ENCODE measurements at regions of chr10 and their contacts with region 1.

Region 1: DNA sequence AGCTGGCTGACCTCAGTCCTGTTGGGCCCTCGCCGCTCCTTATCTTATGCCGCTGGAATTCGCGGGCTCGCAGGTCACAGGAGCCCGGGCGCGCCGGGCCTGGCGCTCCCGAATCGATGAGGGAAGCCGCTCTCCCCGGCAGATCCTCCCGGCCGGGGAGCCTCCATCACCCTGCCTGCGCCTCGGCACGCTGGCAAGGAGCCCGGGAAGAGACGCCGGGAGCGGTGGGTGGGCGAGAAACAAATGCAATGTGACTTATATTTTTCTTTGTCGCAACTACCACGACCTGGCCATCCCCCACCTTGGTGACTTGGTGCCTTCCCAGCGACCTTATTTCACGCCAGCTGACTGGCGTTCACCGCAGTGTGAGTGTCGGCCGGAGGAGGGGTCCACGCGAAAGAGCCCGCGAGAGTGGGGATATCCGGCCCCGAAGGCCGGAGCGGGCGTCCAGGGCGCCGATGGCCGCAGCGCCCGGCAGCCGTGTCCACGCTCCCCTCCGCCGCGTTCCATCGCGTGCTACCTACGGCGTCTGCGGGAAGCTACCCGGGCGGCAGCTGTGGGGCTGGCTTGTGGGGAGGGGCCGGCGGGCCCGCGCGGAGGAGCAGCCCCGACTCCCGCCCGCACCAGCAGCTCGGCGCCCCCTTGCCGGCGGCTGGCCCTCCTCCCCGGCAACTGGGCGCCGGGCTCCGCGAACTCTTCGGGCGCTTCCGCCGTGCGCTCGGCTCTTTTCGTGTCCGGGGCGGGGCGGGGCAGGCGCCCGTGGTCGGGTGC is 494 bp upstream of the BMPR1A start:
- DNase-seq: peak; percentile 89
- H3K4me3 Mint-ChIP-seq: peak overlapping the region; percentile 79
- H3K27ac Mint-ChIP-seq: peak overlapping the region; percentile 59
- H3K4me1 Mint-ChIP-seq: peaks cover 53% of the 10 kb centered on the region
- H3K27me3 Mint-ChIP-seq: peaks cover 13% of the 10 kb centered on the region

Region 2: DNA sequence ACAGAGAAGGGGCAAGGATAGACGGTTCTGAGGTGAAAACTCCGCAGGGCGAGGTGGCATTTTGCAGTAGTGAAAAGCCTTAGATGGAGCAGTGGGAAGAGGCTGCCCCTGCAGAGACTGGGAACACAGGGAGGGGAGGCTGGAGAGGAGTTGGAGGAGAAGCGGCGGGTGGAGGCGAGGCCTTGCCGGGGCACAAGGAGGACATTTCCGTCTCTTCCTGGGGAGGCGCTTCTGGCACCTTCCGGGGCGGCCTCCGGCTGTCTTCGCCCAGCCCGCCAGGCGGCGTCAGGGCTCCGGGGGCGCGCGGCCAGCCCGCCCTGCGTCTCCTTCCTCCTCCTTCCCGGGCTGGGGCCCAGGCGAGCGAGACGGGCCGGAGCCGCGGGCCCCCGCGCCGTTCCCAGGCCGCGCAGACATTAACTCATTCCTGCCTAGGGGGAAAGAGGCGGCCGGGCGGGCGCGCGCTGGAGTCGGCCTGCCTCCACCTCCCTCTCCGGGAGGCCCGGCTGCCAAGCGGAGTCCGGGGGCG is 44.9 kb before region 1 on chr10:
- CTCF ChIA-PET with region 1: interaction called, 3 read pairs
- POLR2A ChIA-PET with region 1: interaction called, 31 read pairs
- DNase-seq: peak; percentile 88
- H3K4me3 Mint-ChIP-seq: peak overlapping the region; percentile 84
- H3K27ac Mint-ChIP-seq: peak overlapping the region; percentile 92
- H3K4me1 Mint-ChIP-seq: peaks cover 15% of the 10 kb centered on the region
- H3K27me3 Mint-ChIP-seq: no peaks in the 10 kb centered on the region

Region 3: DNA sequence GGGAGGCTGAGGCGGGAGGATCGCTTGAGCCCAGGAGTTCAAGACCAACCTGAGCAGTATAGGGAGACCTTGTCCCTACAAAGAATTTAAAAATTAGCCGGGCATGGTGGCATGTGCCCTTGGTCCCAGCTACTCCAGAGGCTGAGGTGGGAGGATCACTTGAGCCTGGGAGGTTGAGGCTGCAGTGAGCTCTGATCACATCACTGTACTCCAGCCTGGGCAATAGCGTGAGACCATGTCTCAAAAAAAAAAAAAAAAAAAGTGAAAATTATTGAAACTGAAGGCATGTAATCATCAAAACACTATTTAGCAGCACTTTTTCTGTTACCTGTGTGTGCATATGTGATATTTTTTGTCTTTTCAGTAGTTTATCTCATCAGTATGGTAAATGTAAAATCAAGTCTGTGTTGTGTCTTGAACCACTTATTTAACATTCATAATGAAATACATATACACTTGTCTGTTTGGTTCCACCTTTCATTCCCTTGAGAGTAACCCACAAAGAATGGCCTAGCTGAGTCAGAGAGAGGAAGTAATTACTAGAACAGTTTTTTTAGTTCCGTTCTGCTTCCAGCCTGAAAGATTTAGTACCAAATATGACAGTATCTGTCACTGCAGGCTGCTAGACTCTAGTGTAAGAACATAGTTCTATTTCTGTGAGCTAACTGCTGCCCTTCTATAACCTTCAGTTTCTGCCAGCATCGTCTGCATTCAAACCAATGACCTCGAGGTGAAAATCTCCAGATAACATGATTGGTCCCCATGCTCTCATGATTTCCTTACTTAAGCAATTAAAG is 132.9 kb after region 1 on chr10:
- CTCF ChIA-PET with region 1: no interaction called
- POLR2A ChIA-PET with region 1: no interaction called
- DNase-seq: no peak
- H3K4me3 Mint-ChIP-seq: no peak overlapping the region
- H3K27ac Mint-ChIP-seq: peak overlapping the region; percentile 51
- H3K4me1 Mint-ChIP-seq: peaks cover 14% of the 10 kb centered on the region
- H3K27me3 Mint-ChIP-seq: no peaks in the 10 kb centered on the region